Activated CD4-positive, alpha-beta T cell treated with anti-CD3 and anti-CD28 coated beads for 36 hours (primary cell): ENCODE measurements at regions of chr21 and their contacts with region 1.

Region 1: GRCh38 chr21:32687643-32688345 is 40.0 kb downstream of the SYNJ1 start:
- DNase-seq: no peak
- ATAC-seq: no peak
- H3K4me3 Mint-ChIP-seq: no peak overlapping the region
- H3K27ac Mint-ChIP-seq: no peak overlapping the region
- H3K4me1 Mint-ChIP-seq: peaks cover 2% of the 10 kb centered on the region
- H3K27me3 Mint-ChIP-seq: no peaks in the 10 kb centered on the region

Region 2: DNA sequence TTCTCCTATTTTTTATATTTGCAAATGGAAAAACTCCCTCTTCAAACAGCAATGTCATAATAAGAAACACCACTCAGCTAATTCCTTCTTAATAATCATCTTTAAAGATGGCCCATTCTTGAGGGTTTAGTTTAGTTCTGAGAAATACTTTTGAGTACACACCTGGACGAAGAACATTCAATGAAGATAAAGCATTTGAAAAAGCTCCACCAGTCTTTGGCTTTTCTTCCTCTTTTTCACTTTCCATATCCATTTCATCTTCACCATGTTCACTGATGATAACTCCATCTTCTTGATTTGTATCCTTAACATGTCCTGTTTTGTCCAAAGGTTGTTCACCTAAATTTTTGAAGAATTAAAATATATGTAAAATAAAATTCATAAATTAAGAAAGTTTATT is 76.4 kb after region 1 on chr21:
- CTCF ChIA-PET with region 1: no interaction called
- POLR2A ChIA-PET with region 1: no interaction called
- intact Hi-C with region 1: no loop called
- DNase-seq: no peak
- ATAC-seq: no peak
- H3K4me3 Mint-ChIP-seq: no peak overlapping the region
- H3K27ac Mint-ChIP-seq: no peak overlapping the region
- H3K4me1 Mint-ChIP-seq: peaks cover 46% of the 10 kb centered on the region
- H3K27me3 Mint-ChIP-seq: no peaks in the 10 kb centered on the region

Region 3: DNA sequence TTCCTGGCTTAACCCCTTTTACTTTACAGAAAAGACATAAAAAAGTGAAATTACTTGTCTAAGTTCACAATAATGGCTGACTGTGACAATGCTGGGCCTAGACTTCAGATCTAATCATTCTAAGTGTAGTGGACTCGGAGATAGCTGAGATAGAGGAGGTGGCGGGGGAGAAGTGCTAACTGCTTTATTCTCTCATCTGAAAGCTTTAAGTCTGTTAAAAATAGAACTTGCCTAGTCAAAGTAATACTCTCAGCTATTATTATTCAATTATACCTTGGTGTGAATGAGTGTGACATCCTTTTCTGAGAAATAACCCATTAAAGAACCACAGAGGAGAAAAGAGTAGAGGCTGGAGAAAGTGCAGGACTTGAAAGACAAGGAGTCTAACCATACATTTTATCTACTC is 241.8 kb after region 1 on chr21:
- CTCF ChIA-PET with region 1: no interaction called
- POLR2A ChIA-PET with region 1: no interaction called
- intact Hi-C with region 1: no loop called
- DNase-seq: peak; percentile 12
- ATAC-seq: peak; percentile 21
- H3K4me3 Mint-ChIP-seq: peak overlapping the region; percentile 6
- H3K27ac Mint-ChIP-seq: peak overlapping the region; percentile 48
- H3K4me1 Mint-ChIP-seq: peaks cover 35% of the 10 kb centered on the region
- H3K27me3 Mint-ChIP-seq: peaks cover 2% of the 10 kb centered on the region

Region 4: GRCh38 chr21:33185852-33186251 is 498.1 kb after region 1 on chr21:
- CTCF ChIA-PET with region 1: no interaction called
- POLR2A ChIA-PET with region 1: no interaction called
- intact Hi-C with region 1: loop called in 1 of 2 experiments (anchors 10 kb)
- DNase-seq: no peak
- ATAC-seq: peak; percentile 94
- H3K4me3 Mint-ChIP-seq: no peak overlapping the region
- H3K27ac Mint-ChIP-seq: peak overlapping the region; percentile 81
- H3K4me1 Mint-ChIP-seq: peaks cover 50% of the 10 kb centered on the region
- H3K27me3 Mint-ChIP-seq: no peaks in the 10 kb centered on the region